ENCODE measurements at regions of chr1 and their contacts with region 1.

Region 1: GRCh38 chr1:25642574-25643108 is 26.1 kb downstream of the MAN1C1 start:
- DNase-seq: peak; percentile 86
- H3K4me3 Mint-ChIP-seq: peak overlapping the region; percentile 33
- H3K27ac Mint-ChIP-seq: peak overlapping the region; percentile 74
- H3K4me1 Mint-ChIP-seq: peaks cover 48% of the 10 kb centered on the region
- H3K27me3 Mint-ChIP-seq: peaks cover 71% of the 10 kb centered on the region

Region 2: GRCh38 chr1:25616095-25616986 is 26.3 kb before region 1 on chr1 and contains the start of gene MAN1C1:
- CTCF ChIA-PET with region 1: interaction called, 22 read pairs
- POLR2A ChIA-PET with region 1: interaction called, 22 read pairs
- DNase-seq: peak; percentile 82
- H3K4me3 Mint-ChIP-seq: peak within 1 kb of the TSS; percentile 65
- H3K27ac Mint-ChIP-seq: no peak within 1 kb of the TSS
- H3K4me1 Mint-ChIP-seq: peaks cover 52% of the 10 kb centered on the region
- H3K27me3 Mint-ChIP-seq: peaks cover 51% of the 10 kb centered on the region
- total RNA-seq, gene MAN1C1: 22.3 to 24.1 TPM

Region 3: GRCh38 chr1:25624156-25624555 is 18.5 kb before region 1 on chr1:
- CTCF ChIA-PET with region 1: interaction called, 22 read pairs
- POLR2A ChIA-PET with region 1: interaction called, 22 read pairs
- DNase-seq: peak; percentile 68
- H3K4me3 Mint-ChIP-seq: no peak overlapping the region
- H3K27ac Mint-ChIP-seq: peak overlapping the region; percentile 67
- H3K4me1 Mint-ChIP-seq: peaks cover 73% of the 10 kb centered on the region
- H3K27me3 Mint-ChIP-seq: peaks cover 17% of the 10 kb centered on the region

Region 4: DNA sequence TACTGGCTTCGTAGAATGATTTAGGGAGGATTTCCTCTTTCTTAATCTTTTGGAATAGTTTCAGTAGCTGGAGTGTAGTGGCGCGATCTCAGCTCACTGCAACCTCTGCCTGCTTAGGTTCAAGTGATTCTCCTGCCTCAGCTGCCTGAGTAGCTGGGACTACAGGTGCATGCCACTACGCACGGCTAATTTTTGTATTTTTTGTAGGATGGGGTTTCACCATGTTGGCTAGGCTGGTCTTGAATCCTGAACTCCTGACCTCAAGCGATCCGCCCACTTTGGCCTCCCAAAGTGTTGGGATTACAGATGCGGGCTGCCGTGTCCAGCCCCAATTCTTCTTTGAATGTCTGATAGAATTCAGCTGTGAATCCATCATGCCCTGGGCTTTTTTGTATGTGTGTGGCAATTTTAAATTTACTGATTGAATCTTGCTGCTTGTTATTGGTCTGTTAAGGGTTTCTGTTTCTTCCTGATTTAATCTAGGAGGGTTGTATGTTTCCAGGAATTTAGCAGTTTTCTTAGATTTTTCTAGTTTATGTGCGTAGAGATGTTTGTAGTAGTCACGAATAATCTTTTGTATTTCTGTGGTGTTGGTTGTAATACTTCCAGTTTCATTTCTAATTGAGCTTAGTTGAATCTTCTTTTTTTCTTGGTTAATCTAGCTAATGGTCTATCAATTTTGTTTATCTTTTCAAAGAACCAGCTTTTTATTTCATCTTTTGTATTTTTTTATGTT is 10.7 kb before region 1 on chr1:
- CTCF ChIA-PET with region 1: interaction called, 11 read pairs
- POLR2A ChIA-PET with region 1: interaction called, 31 read pairs
- DNase-seq: no peak
- H3K4me3 Mint-ChIP-seq: peak overlapping the region; percentile 71
- H3K27ac Mint-ChIP-seq: peak overlapping the region; percentile 84
- H3K4me1 Mint-ChIP-seq: peaks cover 72% of the 10 kb centered on the region
- H3K27me3 Mint-ChIP-seq: peaks cover 7% of the 10 kb centered on the region

Measured in activated CD4-positive, alpha-beta memory T cell treated with anti-CD3 and anti-CD28 coated beads, Interleukin-2, amount 10 ng/mL, durations not matched to agents 7 days and 5 days (primary cell).